CD14-positive monocyte (primary cell): ENCODE measurements at regions of chr19 and their contacts with region 1.

Region 1: DNA sequence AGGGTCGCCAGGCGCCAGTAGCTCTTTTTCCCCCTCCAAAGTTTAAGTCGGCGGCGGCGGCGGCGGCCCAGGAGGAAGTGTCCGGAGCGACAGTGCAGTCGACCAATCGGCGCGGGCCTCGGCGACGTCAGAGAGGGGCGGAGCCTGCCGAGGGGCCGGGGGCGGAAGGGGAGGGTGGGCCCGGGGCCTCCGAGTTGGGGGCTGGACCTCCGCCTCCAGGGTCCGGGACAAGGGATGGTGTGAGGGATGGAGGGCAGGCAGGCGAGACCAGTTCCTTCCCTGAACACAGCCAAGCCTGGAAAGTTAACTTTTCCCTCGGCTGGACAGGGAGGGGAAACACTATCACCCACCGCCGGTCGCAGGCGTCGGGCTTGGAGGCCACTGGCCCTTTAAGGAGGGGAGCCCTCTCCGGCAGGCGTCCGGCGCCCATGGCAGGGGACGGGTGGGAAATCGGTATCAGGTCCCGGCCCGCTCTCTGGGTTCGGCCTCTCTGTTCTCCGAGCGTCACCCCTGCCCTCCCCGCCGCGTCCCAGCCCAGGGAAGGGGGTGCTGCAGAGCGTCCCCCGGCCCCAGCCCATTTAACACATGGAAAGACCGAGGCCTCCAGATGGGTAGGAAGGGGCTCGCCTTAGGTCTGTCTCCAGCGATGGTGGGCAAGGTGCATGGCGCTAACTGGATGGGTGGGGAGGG is at the start of gene PRKD2:
- DNase-seq: peak; percentile 69 to 77 (median 69)
- H3K4me3 ChIP-seq: peak within 1 kb of the TSS; percentile 78 to 94 (median 81)
- H3K4me3 Mint-ChIP-seq: peak within 1 kb of the TSS; percentile 94 to 96
- H3K27ac ChIP-seq: peak within 1 kb of the TSS; percentile 64 to 89
- H3K27ac Mint-ChIP-seq: peak within 1 kb of the TSS; percentile 83 to 94 (median 91)
- H3K4me1 ChIP-seq: peaks cover 57 to 67% of the 10 kb centered on the region in 2 donors
- H3K4me1 Mint-ChIP-seq: peaks cover 58% of the 10 kb centered on the region
- H3K27me3 ChIP-seq: peaks cover 0 to 10% of the 10 kb centered on the region in 2 donors
- H3K27me3 Mint-ChIP-seq: peaks cover 9 to 23% (median 13%) of the 10 kb centered on the region in 3 donors
- CTCF ChIP-seq: no peak
- polyA plus RNA-seq, gene PRKD2: 6.5 to 46.9 (median 8.1) TPM

Region 2: GRCh38 chr19:46614114-46614722 is 103.0 kb before region 1 on chr19:
- intact Hi-C with region 1: loop called in 1 of 2 experiments (anchors 10 kb)
- DNase-seq: peak; percentile 73 to 81 (median 76)
- H3K4me3 ChIP-seq: no peak overlapping the region
- H3K4me3 Mint-ChIP-seq: peak overlapping the region in 1 of 2 donors; percentile 65
- H3K27ac ChIP-seq: no peak overlapping the region
- H3K27ac Mint-ChIP-seq: peak overlapping the region in 1 of 7 donors; percentile 47
- H3K4me1 ChIP-seq: peaks cover 49 to 50% of the 10 kb centered on the region in 2 donors
- H3K4me1 Mint-ChIP-seq: peaks cover 50% of the 10 kb centered on the region
- H3K27me3 ChIP-seq: peaks cover 0 to 24% of the 10 kb centered on the region in 2 donors
- H3K27me3 Mint-ChIP-seq: peaks cover 28 to 48% (median 39%) of the 10 kb centered on the region in 3 donors
- CTCF ChIP-seq: peak; percentile 89